HepG2 (cell line): ENCODE measurements at regions of chr4 and their contacts with region 1.

Region 1: GRCh38 chr4:75995727-75996126 is 5.0 kb upstream of the SDAD1 start:
- DNase-seq: peak; percentile 49
- ATAC-seq: peak; percentile 19; the same call in 2 of the 3 replicates
- H3K4me3 ChIP-seq: no peak overlapping the region
- H3K27ac ChIP-seq: no peak overlapping the region
- H3K4me1 ChIP-seq: peaks cover 5% of the 10 kb centered on the region; the same call in 1 of the 2 replicates
- H3K27me3 ChIP-seq: no peaks in the 10 kb centered on the region
- CTCF ChIP-seq: peak; percentile 61
- EP300 ChIP-seq: no peak
- POLR2A ChIP-seq: no peak
- RAD21 ChIP-seq: no peak

Region 2: GRCh38 chr4:75878246-75878756 is 117.4 kb before region 1 on chr4:
- CTCF ChIA-PET with region 1: no interaction called
- POLR2A ChIA-PET with region 1: no interaction called
- in situ Hi-C with region 1: no loop called
- intact Hi-C with region 1: no loop called
- DNase-seq: no peak
- ATAC-seq: peak; percentile 54; the same call in 2 of the 3 replicates
- H3K4me3 ChIP-seq: no peak overlapping the region
- H3K27ac ChIP-seq: no peak overlapping the region
- H3K4me1 ChIP-seq: no peaks in the 10 kb centered on the region
- H3K27me3 ChIP-seq: peaks cover 0 to 7% of the 10 kb centered on the region in 2 experiments; a peak in 3 of 5 replicates
- CTCF ChIP-seq: no peak
- EP300 ChIP-seq: no peak
- POLR2A ChIP-seq: no peak
- RAD21 ChIP-seq: no peak

Region 3: GRCh38 chr4:76067652-76068286 is 72.0 kb after region 1 on chr4:
- CTCF ChIA-PET with region 1: interaction called, 36 read pairs
- POLR2A ChIA-PET with region 1: no interaction called
- in situ Hi-C with region 1: loop called (anchors 5 kb)
- intact Hi-C with region 1: loop called (anchors 1 kb)
- DNase-seq: peak; percentile 60
- ATAC-seq: peak; percentile 92
- H3K4me3 ChIP-seq: no peak overlapping the region
- H3K27ac ChIP-seq: no peak overlapping the region
- H3K4me1 ChIP-seq: no peaks in the 10 kb centered on the region
- H3K27me3 ChIP-seq: no peaks in the 10 kb centered on the region
- CTCF ChIP-seq: peak; percentile 80
- EP300 ChIP-seq: no peak
- POLR2A ChIP-seq: no peak
- RAD21 ChIP-seq: peak; percentile 66

Region 4: DNA sequence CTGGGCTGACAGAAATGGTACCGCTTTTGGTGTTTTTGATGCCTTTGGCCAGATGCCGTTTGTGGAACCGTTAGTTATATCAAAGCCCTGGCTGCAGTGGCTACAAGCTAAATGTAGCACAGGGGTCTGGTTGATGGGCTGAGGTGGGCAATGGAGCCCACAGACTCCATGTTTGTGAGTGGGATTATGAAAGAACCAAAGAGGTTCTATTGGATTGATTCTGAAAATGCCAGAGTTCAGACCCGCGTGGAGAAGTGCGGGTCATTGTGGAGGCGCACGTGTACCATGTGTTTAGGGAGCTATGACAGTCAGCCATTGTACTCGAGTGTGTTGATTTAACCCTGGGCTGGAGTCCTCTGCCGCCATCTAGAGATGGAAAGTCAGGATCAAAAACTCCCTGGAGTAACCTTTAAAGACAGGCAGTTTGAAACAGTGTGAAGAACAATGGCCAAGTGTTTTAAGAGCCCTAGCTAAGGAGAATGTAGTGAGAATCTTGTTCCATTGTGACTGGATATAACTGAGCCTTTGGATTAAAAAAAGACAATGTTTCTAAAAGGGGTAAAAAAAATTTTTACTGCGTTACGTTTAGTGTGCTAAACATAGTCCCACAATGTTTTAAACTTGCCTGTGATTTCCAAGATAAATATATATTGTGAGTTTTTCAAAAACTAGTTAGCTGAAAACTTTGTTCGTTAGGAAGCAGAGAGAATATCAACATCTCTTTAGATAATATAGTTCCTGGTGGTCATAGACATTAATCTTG is 91.5 kb after region 1 on chr4:
- CTCF ChIA-PET with region 1: interaction called, 4 read pairs
- POLR2A ChIA-PET with region 1: interaction called, 3 read pairs
- in situ Hi-C with region 1: no loop called
- intact Hi-C with region 1: loop called (anchors 1 kb)
- DNase-seq: peak; percentile 86
- ATAC-seq: peak; percentile 99
- H3K4me3 ChIP-seq: 0 out of 6 replicates have a peak overlapping the region, but pooled peaks of 1 of the 3 experiments have one; percentile 9
- H3K27ac ChIP-seq: no peak overlapping the region
- H3K4me1 ChIP-seq: peaks cover 13% of the 10 kb centered on the region
- H3K27me3 ChIP-seq: no peaks in the 10 kb centered on the region
- CTCF ChIP-seq: peak; percentile 81
- EP300 ChIP-seq: no peak
- POLR2A ChIP-seq: no peak
- RAD21 ChIP-seq: peak; percentile 62